ENCODE measurements at regions of chr2 and their contacts with region 1.

Region 1: DNA sequence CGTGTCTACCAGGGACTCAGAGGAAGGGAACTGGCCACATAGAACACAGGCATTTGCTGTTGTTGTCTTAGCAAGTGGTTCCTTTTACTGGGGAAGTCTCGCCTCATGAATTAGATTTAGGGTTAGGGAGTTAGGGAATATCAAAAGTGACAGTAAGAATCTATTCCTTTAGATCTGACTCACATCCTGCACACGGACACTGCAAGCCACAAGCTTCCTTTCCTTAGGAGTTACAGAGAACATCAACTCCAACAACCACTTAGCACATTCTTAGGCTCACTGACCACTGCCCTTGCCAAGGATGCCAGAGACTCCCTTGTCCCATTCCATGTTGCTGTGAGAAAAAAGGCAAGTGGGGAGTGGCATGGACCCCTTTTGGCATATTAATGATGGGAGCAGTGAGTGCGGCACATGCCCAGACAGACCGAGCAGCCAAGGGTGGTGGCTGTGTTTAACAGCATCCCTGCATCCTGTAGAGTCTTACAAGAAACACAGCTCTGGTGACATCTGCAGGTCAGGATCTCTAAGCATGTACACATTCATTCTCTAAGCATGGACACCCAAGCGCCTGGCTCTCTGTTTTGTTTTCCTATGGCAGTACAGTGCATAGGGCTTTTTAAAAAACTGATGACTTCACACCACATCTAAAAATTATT is 745.6 kb upstream of the RAB6C start:
- DNase-seq: peak; percentile 17
- H3K4me3 Mint-ChIP-seq: no peak overlapping the region
- H3K27ac Mint-ChIP-seq: peak overlapping the region; percentile 51
- H3K4me1 Mint-ChIP-seq: peaks cover 13% of the 10 kb centered on the region
- H3K27me3 Mint-ChIP-seq: no peaks in the 10 kb centered on the region
- CTCF ChIP-seq: peak; percentile 39

Region 2: DNA sequence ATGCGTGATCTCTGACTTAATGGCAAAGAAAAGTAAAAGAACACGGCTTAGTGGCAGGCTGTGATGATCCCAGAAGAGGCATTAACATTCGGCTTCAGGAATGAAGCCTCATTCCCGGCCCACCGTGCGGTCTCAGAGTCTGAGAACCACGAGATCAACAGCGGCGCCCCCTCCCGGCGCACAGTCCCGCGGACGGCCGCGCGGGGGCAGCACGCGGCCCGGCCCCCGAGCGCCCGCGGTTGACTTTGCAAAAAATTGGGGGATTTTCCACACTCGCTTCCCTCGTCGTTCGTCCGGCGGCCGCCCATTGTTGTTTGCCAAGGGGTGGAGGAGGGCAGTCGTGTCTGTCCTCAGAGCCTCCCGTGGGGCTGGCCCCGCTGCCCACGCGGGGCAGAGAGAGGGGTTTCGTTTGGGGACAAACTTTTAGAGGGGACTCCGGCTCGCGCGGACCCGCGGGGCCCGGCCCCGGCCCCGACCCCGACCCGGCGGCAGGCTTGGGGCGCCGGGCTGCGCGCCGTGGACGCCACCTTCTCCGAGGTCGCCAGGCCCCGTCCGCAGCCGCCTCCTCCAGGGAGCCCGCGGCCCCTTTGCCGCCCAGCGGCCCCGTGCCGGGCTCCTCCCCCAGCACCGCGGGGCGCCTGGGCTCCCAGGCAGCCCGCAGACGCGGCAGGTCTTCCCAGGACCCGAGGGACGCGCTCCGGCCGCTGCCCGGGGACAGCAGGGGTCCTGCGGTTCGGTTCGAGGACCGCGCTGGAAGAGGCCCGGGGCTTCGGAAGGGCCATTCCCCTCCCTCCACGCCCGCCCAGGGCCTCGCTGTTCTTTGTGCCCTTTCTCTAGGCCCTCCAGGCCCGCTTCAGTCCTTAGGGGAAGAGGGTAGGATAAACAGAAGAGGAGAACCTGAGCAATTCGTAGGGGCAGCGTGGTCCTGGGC is 911.8 kb before region 1 on chr2:
- CTCF ChIA-PET with region 1: no interaction called
- POLR2A ChIA-PET with region 1: no interaction called
- intact Hi-C with region 1: loop called (anchors 1 kb)
- DNase-seq: peak; percentile 79
- H3K4me3 Mint-ChIP-seq: peak overlapping the region; percentile 60
- H3K27ac Mint-ChIP-seq: no peak overlapping the region
- H3K4me1 Mint-ChIP-seq: no peaks in the 10 kb centered on the region
- H3K27me3 Mint-ChIP-seq: no peaks in the 10 kb centered on the region
- CTCF ChIP-seq: peak; percentile 92

Region 3: GRCh38 chr2:128736689-128737545 is 497.0 kb before region 1 on chr2:
- CTCF ChIA-PET with region 1: no interaction called
- POLR2A ChIA-PET with region 1: no interaction called
- intact Hi-C with region 1: loop called (anchors 1 kb)
- DNase-seq: peak; percentile 66
- H3K4me3 Mint-ChIP-seq: peak overlapping the region; percentile 56
- H3K27ac Mint-ChIP-seq: no peak overlapping the region
- H3K4me1 Mint-ChIP-seq: peaks cover 18% of the 10 kb centered on the region
- H3K27me3 Mint-ChIP-seq: no peaks in the 10 kb centered on the region
- CTCF ChIP-seq: peak; percentile 99

Region 4: GRCh38 chr2:129192117-129192516 is 41.8 kb before region 1 on chr2:
- CTCF ChIA-PET with region 1: no interaction called
- POLR2A ChIA-PET with region 1: no interaction called
- intact Hi-C with region 1: no loop called
- DNase-seq: no peak
- H3K4me3 Mint-ChIP-seq: no peak overlapping the region
- H3K27ac Mint-ChIP-seq: peak overlapping the region; percentile 90
- H3K4me1 Mint-ChIP-seq: peaks cover 31% of the 10 kb centered on the region
- H3K27me3 Mint-ChIP-seq: no peaks in the 10 kb centered on the region
- CTCF ChIP-seq: no peak

Region 5: GRCh38 chr2:129301431-129301913 is 67.6 kb after region 1 on chr2:
- CTCF ChIA-PET with region 1: no interaction called
- POLR2A ChIA-PET with region 1: no interaction called
- intact Hi-C with region 1: no loop called
- DNase-seq: peak; percentile 15
- H3K4me3 Mint-ChIP-seq: no peak overlapping the region
- H3K27ac Mint-ChIP-seq: no peak overlapping the region
- H3K4me1 Mint-ChIP-seq: no peaks in the 10 kb centered on the region
- H3K27me3 Mint-ChIP-seq: no peaks in the 10 kb centered on the region
- CTCF ChIP-seq: no peak